Posterior vena cava (tissue), 2 donors: ENCODE measurements at regions of chr11 and their contacts with region 1.

Region 1: DNA sequence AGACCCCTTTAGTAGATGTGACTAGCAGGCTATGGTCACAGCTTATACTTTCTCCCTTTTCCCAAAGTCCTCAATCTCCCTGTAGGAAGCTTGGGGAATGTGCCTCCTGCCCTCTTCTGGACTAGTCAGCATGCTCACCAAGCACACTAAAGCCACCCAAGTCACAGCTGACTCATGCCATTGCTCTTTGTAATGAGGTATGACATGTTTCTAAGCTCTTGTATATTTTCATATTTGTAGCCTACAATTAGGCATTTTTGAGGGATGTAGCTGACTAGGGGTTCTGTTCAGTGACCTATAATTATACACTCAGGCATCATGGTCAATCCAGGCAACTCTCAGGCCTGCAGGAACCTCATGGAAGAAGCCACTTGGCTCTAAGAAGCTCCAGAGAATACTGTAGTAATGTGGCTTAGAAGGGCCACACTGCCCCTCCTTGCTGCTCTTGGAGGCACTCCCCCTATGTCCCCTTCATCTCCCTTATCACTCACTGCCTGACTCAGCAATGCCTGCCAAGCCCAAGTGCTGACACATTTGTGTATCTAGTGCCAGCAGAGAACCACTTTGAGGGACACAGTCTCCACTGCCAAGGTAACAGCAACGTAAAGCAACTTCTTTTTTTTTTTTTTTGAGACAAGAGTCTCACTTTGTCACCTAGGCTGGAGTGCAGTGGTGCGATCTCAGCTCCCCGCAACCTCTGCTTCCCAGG is 86.2 kb downstream of the RPL27A start:
- DNase-seq: no peak

Region 2: GRCh38 chr11:8709002-8709672 is 59.6 kb before region 1 on chr11:
- intact Hi-C with region 1: loop called in 1 of 2 experiments (anchors 5 kb)
- DNase-seq: peak; percentile 97